ENCODE measurements at regions of chr11 and their contacts with region 1.

Region 1: DNA sequence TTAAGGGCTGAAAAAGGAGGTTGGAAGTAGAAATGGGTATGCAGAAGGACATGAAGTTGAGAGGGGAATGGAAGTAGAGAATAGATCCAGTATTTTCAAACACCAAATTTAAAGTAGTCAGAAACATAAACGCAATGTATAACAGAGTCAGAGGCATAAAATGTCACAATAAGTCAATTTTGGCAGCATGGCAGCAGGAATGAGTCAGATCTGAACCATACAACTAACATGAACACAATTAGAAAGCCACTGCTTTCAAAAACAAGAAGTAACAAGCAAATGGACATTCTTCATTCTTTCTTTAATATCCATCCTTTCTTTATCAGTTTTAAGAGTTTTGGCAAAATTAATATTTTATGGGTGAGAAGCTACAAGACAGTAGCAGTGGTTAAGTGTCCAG is 2.5 kb downstream of the CHORDC1 start:
- DNase-seq: peak; percentile 9
- ATAC-seq: no peak
- H3K4me3 Mint-ChIP-seq: peak overlapping the region; percentile 100
- H3K27ac Mint-ChIP-seq: peak overlapping the region; percentile 81
- H3K4me1 Mint-ChIP-seq: peaks cover 56% of the 10 kb centered on the region
- H3K27me3 Mint-ChIP-seq: no peaks in the 10 kb centered on the region
- CTCF ChIP-seq: no peak

Region 2: GRCh38 chr11:90204832-90205646 is 15.4 kb before region 1 on chr11:
- CTCF ChIA-PET with region 1: interaction called, 18 read pairs
- POLR2A ChIA-PET with region 1: interaction called, 3 read pairs
- intact Hi-C with region 1: no loop called
- DNase-seq: peak; percentile 17
- ATAC-seq: peak; percentile 83
- H3K4me3 Mint-ChIP-seq: no peak overlapping the region
- H3K27ac Mint-ChIP-seq: peak overlapping the region; percentile 58
- H3K4me1 Mint-ChIP-seq: peaks cover 18% of the 10 kb centered on the region
- H3K27me3 Mint-ChIP-seq: no peaks in the 10 kb centered on the region
- CTCF ChIP-seq: peak; percentile 91

Measured in activated CD8-positive, alpha-beta T cell treated with anti-CD3 and anti-CD28 coated beads for 36 hours (primary cell).